ENCODE measurements at regions of chr6 and their contacts with region 1.

Region 1: GRCh38 chr6:130872250-130873095 is 45.3 kb downstream of the SMLR1 start:
- DNase-seq: no peak
- H3K4me3 ChIP-seq: no peak overlapping the region
- CTCF ChIP-seq: peak; percentile 84

Region 2: DNA sequence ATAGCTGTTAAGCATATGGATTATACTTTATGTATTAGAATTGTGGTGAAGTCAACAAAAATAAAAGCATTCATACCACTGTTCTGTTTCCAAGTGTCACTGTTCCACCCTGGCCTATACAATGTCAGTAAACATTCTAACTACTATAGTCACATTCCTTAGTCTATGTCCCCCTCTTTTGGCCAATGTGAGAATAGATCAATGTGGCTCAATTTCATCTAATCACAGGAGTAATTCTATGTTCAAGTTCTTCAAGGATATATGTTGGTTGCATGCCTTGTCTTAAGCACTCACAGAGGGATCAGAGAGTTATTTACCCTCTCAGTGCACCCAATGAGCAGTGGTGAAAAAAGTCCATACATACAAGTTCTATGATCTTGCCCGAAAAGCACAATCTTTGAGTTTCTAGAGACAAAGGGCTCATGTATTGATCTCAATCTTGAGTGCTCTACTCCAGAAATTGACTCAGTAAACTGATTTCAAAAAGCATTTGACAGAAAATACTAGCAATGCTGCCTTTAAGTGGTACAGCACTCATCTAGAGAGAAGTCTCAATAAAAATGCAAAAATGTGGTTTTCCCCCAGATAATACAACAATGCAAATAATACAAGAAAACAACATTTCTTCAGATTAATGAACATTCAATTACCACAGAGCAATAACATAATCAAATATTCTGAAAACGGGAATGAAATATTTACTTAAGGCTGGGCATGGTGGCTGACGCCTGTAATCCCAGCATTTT is 28.7 kb before region 1 on chr6:
- CTCF ChIA-PET with region 1: interaction called, 11 read pairs
- POLR2A ChIA-PET with region 1: no interaction called
- DNase-seq: no peak
- H3K4me3 ChIP-seq: no peak overlapping the region
- CTCF ChIP-seq: peak; percentile 59

Region 3: GRCh38 chr6:130853555-130854183 is 18.8 kb before region 1 on chr6:
- CTCF ChIA-PET with region 1: interaction called, 58 read pairs
- POLR2A ChIA-PET with region 1: no interaction called
- DNase-seq: no peak
- H3K4me3 ChIP-seq: no peak overlapping the region
- CTCF ChIP-seq: no peak

Region 4: GRCh38 chr6:130923350-130923749 is 50.9 kb after region 1 on chr6:
- CTCF ChIA-PET with region 1: no interaction called
- POLR2A ChIA-PET with region 1: no interaction called
- DNase-seq: no peak
- H3K4me3 ChIP-seq: no peak overlapping the region
- CTCF ChIP-seq: no peak

Region 5: GRCh38 chr6:130958468-130958867 is 86.0 kb after region 1 on chr6:
- CTCF ChIA-PET with region 1: no interaction called
- POLR2A ChIA-PET with region 1: no interaction called
- DNase-seq: no peak
- H3K4me3 ChIP-seq: no peak overlapping the region
- CTCF ChIP-seq: no peak

Measured in AG04449 (cell line).